ENCODE measurements at regions of chr4 and their contacts with region 1.

Region 1: DNA sequence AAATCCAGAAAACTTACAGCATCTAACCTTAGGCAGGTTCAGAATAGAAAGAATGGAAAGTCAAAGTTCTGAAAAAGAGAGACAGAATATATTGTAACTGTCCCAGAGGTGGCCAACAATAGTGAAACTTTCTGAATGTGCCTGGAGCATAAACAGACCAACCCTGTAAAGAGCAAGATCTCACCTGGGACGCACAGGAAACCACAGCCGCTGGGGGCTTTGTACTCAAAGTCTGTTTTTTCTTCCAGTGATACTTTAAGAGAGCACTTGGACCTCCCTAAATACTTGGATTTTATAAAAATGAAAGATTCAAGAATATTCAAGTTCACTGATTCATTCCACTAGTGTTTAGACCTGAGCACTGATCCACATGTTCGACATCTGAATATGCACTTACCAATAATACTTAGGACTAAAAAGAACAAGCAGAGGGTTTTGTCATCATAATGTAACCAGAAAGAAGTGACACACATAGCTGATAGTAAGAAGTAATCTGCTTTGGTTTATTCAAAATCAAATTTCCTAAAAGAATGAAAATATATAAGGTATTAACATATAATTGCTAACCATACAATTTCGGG is 35.3 kb downstream of the ARAP2 start:
- DNase-seq: no peak
- ATAC-seq: peak; percentile 64
- H3K4me3 ChIP-seq: no peak overlapping the region
- H3K27ac ChIP-seq: peak overlapping the region; percentile 6; the same call in 1 of the 2 replicates
- H3K4me1 ChIP-seq: peaks cover 21% of the 10 kb centered on the region
- H3K27me3 ChIP-seq: no peaks in the 10 kb centered on the region
- CTCF ChIP-seq: no peak
- EP300 ChIP-seq: no peak
- POLR2A ChIP-seq: no peak
- RAD21 ChIP-seq: no peak

Region 2: DNA sequence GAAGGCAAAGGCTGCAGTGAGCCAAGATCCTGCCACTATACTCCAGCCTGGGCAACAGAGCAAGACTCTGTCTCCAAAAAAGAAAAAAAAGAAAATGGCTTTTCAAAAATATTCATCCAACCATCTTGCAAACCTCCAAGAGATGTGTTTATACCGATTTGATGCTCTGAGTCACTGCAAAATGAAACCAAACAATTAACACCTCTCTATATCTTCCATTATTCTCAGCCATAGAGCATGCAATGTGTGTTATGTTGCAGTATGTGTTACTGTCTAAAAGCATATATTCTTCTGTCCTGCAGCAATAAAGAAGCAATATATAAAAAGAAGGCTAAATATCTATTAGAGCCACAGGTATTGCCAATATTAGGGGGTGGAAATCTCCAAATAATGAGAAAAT is 16.1 kb before region 1 on chr4:
- CTCF ChIA-PET with region 1: interaction called, 3 read pairs
- POLR2A ChIA-PET with region 1: interaction called, 10 read pairs
- RAD21 ChIA-PET with region 1: interaction called, 3 read pairs
- SMC1A ChIA-PET with region 1: interaction called, 10 read pairs
- in situ Hi-C with region 1: no loop called
- intact Hi-C with region 1: no loop called
- DNase-seq: no peak
- ATAC-seq: no peak
- H3K4me3 ChIP-seq: no peak overlapping the region
- H3K27ac ChIP-seq: no peak overlapping the region
- H3K4me1 ChIP-seq: peaks cover 4% of the 10 kb centered on the region; the same call in 1 of the 2 replicates
- H3K27me3 ChIP-seq: no peaks in the 10 kb centered on the region
- CTCF ChIP-seq: no peak
- EP300 ChIP-seq: no peak
- POLR2A ChIP-seq: no peak
- RAD21 ChIP-seq: no peak

Region 3: DNA sequence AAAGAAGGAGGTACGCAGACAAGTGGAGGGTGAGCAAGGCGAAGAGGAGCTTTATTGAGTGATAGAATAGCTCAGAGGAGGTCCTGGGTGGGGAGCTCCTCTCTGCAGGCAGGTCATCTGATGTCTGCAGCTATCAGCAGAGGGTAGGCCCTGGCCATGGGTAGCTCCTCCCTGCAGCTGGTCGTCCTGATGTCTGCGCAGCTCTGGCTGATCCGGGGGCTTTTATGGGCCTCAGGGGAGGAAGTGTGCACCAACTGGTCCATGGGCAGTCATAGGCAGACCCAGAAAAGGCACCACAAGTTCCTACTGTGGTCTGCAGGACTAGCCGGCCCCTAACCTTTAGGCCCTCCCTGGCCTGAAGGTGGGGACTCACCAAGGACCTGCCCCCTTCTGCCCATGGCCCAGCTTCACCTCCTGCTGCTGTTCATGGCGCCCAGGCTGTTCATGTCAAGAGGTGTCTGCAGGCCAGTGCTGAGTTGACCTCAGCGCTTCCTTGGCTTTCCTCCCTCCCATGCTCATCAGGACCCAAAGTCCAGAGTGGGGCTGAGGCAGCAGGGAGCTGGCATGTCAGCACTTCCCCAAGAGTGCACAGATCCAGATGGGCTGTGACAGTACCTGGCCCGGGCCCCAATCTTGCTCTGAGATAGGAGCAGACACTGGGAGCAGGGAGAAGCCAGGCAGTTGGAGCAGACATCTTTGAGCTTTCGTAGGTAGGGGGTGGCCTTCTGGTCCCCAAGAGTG is 10.7 kb before region 1 on chr4:
- CTCF ChIA-PET with region 1: interaction called, 4 read pairs
- POLR2A ChIA-PET with region 1: interaction called, 3 read pairs
- RAD21 ChIA-PET with region 1: interaction called, 7 read pairs
- SMC1A ChIA-PET with region 1: interaction called, 11 read pairs
- in situ Hi-C with region 1: no loop called
- intact Hi-C with region 1: no loop called
- DNase-seq: no peak
- ATAC-seq: no peak; the same call in 2 of the 3 replicates
- H3K4me3 ChIP-seq: no peak overlapping the region
- H3K27ac ChIP-seq: no peak overlapping the region
- H3K4me1 ChIP-seq: no peaks in the 10 kb centered on the region
- H3K27me3 ChIP-seq: no peaks in the 10 kb centered on the region
- CTCF ChIP-seq: no peak
- EP300 ChIP-seq: no peak
- POLR2A ChIP-seq: no peak
- RAD21 ChIP-seq: no peak

Region 4: DNA sequence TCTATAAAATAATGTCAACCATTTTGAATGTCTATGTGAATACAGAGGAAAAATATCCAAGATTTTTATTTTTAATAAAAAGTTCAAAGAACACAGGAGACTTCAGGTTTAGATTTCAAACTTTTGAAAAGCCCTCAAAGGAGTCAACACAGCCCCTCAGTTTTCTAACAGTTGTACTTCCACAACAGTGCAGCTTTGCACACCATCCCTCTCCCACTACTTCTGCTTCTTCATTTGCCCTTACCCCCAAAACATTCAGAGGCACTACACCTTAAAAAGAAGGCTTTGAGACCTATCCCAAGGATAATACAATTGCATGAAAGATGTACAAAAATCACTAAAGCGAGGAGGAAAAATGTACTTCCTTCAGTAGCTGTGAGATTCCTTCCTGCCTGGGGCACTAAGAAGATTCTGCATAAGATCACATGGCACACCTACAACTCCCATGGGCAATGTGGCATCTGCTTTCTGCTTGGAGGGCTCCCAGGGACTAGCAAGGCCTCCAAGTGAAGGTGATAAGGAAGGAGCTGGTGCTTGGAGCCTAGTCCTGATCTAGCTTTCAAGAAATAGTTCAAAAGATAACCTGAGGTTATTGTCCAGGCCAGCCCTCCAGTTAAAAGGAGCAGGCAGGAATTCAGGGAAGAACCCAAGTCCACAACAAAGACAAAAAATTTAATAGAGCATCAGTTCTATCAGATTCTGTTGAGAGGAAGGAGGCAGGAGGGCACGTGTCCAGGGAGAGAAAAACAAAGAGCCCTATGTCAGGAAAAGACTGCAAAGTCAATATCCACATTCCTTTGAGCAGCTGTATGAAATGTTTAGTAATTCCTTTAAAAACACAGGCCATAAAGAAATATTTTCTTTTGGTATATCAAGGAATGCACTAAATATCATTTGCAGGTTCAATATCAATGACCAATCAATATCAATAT is 16.3 kb after region 1 on chr4:
- CTCF ChIA-PET with region 1: interaction called, 5 read pairs
- POLR2A ChIA-PET with region 1: no interaction called
- RAD21 ChIA-PET with region 1: no interaction called
- SMC1A ChIA-PET with region 1: interaction called, 10 read pairs
- in situ Hi-C with region 1: no loop called
- intact Hi-C with region 1: no loop called
- DNase-seq: no peak
- ATAC-seq: peak; percentile 62
- H3K4me3 ChIP-seq: peak overlapping the region; percentile 37; the same call in 1 of the 2 replicates
- H3K27ac ChIP-seq: no peak overlapping the region
- H3K4me1 ChIP-seq: no peaks in the 10 kb centered on the region
- H3K27me3 ChIP-seq: no peaks in the 10 kb centered on the region
- CTCF ChIP-seq: no peak
- EP300 ChIP-seq: no peak
- POLR2A ChIP-seq: no peak
- RAD21 ChIP-seq: no peak

Region 5: GRCh38 chr4:36325499-36325898 is 116.5 kb after region 1 on chr4:
- CTCF ChIA-PET with region 1: no interaction called
- POLR2A ChIA-PET with region 1: no interaction called
- RAD21 ChIA-PET with region 1: no interaction called
- SMC1A ChIA-PET with region 1: interaction called, 3 read pairs
- in situ Hi-C with region 1: no loop called
- intact Hi-C with region 1: loop called (anchors 5 kb)
- DNase-seq: peak; percentile 59
- ATAC-seq: peak; percentile 92
- H3K4me3 ChIP-seq: no peak overlapping the region
- H3K27ac ChIP-seq: peak overlapping the region; percentile 93
- H3K4me1 ChIP-seq: peaks cover 57% of the 10 kb centered on the region
- H3K27me3 ChIP-seq: no peaks in the 10 kb centered on the region
- CTCF ChIP-seq: no peak
- EP300 ChIP-seq: 0 out of 4 replicates have a peak, but pooled peaks of 1 of the 2 experiments have one; percentile 16
- POLR2A ChIP-seq: no peak
- RAD21 ChIP-seq: no peak

Measured in GM12878 (cell line).